ENCODE measurements at regions of chr1 and their contacts with region 1.

Region 1: GRCh38 chr1:246139745-246140182 is 367.3 kb downstream of the SMYD3 start:
- DNase-seq: no peak
- ATAC-seq: no peak
- H3K4me3 ChIP-seq: no peak overlapping the region
- H3K4me3 Mint-ChIP-seq: no peak overlapping the region
- H3K27ac ChIP-seq: no peak overlapping the region
- H3K27ac Mint-ChIP-seq: no peak overlapping the region
- H3K4me1 ChIP-seq: no peaks in the 10 kb centered on the region
- H3K4me1 Mint-ChIP-seq: peaks cover 0 to 3% (median 0%) of the 10 kb centered on the region in 7 donors
- H3K27me3 ChIP-seq: no peaks in the 10 kb centered on the region
- H3K27me3 Mint-ChIP-seq: no peaks in the 10 kb centered on the region

Region 2: GRCh38 chr1:246086191-246086590 is 53.6 kb before region 1 on chr1:
- CTCF ChIA-PET with region 1: no interaction called
- POLR2A ChIA-PET with region 1: no interaction called
- intact Hi-C with region 1: loop called in 1 of 2 experiments (anchors 5 kb)
- DNase-seq: no peak
- ATAC-seq: no peak
- H3K4me3 ChIP-seq: no peak overlapping the region
- H3K4me3 Mint-ChIP-seq: no peak overlapping the region
- H3K27ac ChIP-seq: no peak overlapping the region
- H3K27ac Mint-ChIP-seq: no peak overlapping the region
- H3K4me1 ChIP-seq: no peaks in the 10 kb centered on the region
- H3K4me1 Mint-ChIP-seq: peaks cover 0 to 4% (median 0%) of the 10 kb centered on the region in 7 donors
- H3K27me3 ChIP-seq: no peaks in the 10 kb centered on the region
- H3K27me3 Mint-ChIP-seq: no peaks in the 10 kb centered on the region

Measured in naive thymus-derived CD4-positive, alpha-beta T cell (primary cell).